ENCODE measurements at regions of chr11 and their contacts with region 1.

Region 1: GRCh38 chr11:118956094-118956846 is at the start of gene UPK2:
- DNase-seq: peak; percentile 85 to 89
- ATAC-seq: peak; percentile 95 to 98 (median 96)
- H3K4me3 ChIP-seq: no peak within 1 kb of the TSS
- H3K27ac ChIP-seq: no peak within 1 kb of the TSS
- H3K4me1 ChIP-seq: peaks cover 0 to 5% (median 0%) of the 10 kb centered on the region in 9 donors
- H3K27me3 ChIP-seq: peaks cover 0 to 20% (median 4%) of the 10 kb centered on the region in 7 donors
- CTCF ChIP-seq: peak; percentile 88 to 98 (median 95)
- total RNA-seq, gene UPK2: not detected

Region 2: GRCh38 chr11:118536726-118537125 is 419.5 kb before region 1 on chr11:
- intact Hi-C with region 1: no loop called
- DNase-seq: no peak
- ATAC-seq: no peak
- H3K4me3 ChIP-seq: no peak overlapping the region
- H3K27ac ChIP-seq: no peak overlapping the region
- H3K4me1 ChIP-seq: peaks cover 0 to 4% (median under 1%) of the 10 kb centered on the region in 9 donors
- H3K27me3 ChIP-seq: no peaks in the 10 kb centered on the region
- CTCF ChIP-seq: no peak

Region 3: GRCh38 chr11:118907051-118908042 is 48.9 kb before region 1 on chr11:
- intact Hi-C with region 1: loop called in 9 of 10 experiments (anchors 1 to 10 kb)
- DNase-seq: peak; percentile 81 to 89
- ATAC-seq: peak; percentile 34 to 70 (median 57)
- H3K4me3 ChIP-seq: no peak overlapping the region
- H3K27ac ChIP-seq: peak overlapping the region in 9 of 10 donors; percentile 20 to 98 (median 95)
- H3K4me1 ChIP-seq: peaks cover 33 to 67% (median 57%) of the 10 kb centered on the region in 9 donors
- H3K27me3 ChIP-seq: no peaks in the 10 kb centered on the region
- CTCF ChIP-seq: peak; percentile 73 to 96 (median 93)

Measured in heart right ventricle (tissue), 16 donors.